ENCODE measurements at regions of chr2 and their contacts with region 1.

Region 1: DNA sequence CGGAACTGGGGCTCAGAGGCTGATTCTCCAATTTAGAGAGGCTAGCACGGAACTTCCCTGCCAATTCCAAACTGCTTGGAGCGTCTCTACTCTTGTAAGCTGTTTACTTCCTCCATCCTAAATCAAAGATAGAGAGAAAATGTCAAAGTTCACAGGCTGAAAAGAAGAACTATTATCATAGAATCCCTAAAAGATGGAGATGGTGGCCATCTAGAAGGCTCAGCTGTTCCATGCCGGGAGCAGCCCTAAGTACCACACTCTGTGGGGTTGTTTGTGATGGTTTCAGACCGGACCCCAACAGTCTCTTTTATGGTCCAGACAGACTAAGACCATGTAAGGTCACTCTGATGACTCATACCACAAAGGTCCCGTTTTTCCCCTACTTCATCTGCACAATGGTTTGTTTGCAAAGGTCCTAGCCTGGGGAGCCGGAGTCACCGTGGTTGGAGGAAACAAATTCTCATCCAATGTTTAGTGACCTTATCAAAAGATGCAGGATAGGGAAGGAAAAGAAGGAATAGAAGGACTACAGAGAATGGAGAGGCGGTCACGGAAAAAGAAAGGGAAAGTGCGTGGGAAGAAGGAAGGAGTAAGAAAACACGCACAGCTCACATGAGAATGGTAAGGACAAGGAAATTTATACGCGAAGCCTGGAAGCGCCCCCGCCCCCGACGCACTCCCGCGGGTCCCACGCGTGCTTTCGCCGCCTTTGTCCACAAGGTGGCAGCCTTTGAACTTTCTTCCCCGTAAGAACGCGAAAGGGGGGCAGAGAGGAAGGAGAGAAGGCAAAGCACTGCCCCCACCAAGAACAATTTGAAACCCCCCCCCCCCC is 453 bp upstream of the ANTXR1 start:
- DNase-seq: peak in 1 of 2 experiments; percentile 57
- H3K4me3 ChIP-seq: peak overlapping the region; percentile 98
- H3K27ac ChIP-seq: no peak overlapping the region
- H3K4me1 ChIP-seq: peaks cover 15% of the 10 kb centered on the region
- H3K27me3 ChIP-seq: no peaks in the 10 kb centered on the region
- CTCF ChIP-seq: peak; percentile 86

Region 2: GRCh38 chr2:68467077-68467960 is 545.2 kb before region 1 on chr2 and contains the starts of genes APLF and FBXO48:
- CTCF ChIA-PET with region 1: interaction called, 9 read pairs
- POLR2A ChIA-PET with region 1: no interaction called
- intact Hi-C with region 1: loop called (anchors 10 kb)
- DNase-seq: peak; percentile 98
- H3K4me3 ChIP-seq: peak within 1 kb of the TSS; percentile 76
- H3K27ac ChIP-seq: peak within 1 kb of the TSS; percentile 48
- H3K4me1 ChIP-seq: peaks cover 17% of the 10 kb centered on the region
- H3K27me3 ChIP-seq: no peaks in the 10 kb centered on the region
- CTCF ChIP-seq: no peak
- total RNA-seq, gene APLF: 3.9 and 4.5 TPM in 2 replicates
- total RNA-seq, gene FBXO48: 1.2 and 1.6 TPM in 2 replicates

Region 3: DNA sequence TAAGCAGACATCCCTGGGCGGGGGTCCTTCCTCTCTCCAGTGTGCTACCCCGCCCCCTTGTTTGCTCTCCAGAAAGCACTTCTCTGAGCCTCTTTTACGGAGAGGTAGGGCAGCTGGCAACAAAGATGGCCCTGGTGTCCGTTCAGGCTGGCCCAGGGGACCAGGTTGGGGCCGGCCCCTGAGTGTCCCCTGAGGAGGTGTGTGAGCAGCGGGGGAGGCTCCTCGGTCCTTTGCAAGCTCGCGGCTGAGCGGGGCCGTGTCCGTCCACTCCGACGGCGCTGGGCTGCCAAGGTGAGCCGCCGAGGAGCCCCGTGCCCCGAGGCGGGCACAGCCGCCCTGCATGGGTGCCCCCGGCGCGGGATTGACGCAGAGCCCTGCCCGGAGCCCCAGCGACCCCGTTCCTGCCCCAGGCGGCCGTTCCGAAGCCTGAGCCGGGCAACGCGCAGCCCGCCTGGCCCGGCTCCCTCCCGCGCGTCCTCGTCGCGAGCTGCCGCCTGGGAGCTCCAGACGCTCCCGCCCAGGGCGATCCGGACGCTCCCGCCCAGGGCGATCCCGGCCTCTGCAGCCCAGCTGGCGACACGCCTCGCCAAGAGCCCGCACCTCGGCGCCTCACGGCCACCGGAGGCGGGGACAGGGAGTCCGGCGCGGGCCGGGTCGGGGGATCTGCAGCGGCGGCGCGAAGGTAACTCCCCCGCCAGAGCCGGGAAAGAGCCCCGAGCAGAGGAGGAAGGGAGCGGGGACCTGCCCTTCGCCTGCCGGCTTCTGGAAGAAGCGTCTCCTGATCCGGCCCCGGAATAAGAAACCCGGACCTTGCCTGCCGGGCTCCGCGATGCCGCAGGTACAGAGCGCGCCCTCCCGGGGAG is 369.3 kb before region 1 on chr2 and contains the start of gene PROKR1:
- CTCF ChIA-PET with region 1: no interaction called
- POLR2A ChIA-PET with region 1: no interaction called
- intact Hi-C with region 1: no loop called
- DNase-seq: peak in 1 of 2 experiments; percentile 22
- H3K4me3 ChIP-seq: no peak within 1 kb of the TSS
- H3K27ac ChIP-seq: no peak within 1 kb of the TSS
- H3K4me1 ChIP-seq: no peaks in the 10 kb centered on the region
- H3K27me3 ChIP-seq: peaks cover 30% of the 10 kb centered on the region
- CTCF ChIP-seq: no peak
- total RNA-seq, gene PROKR1: not detected in 2 replicates

Region 4: DNA sequence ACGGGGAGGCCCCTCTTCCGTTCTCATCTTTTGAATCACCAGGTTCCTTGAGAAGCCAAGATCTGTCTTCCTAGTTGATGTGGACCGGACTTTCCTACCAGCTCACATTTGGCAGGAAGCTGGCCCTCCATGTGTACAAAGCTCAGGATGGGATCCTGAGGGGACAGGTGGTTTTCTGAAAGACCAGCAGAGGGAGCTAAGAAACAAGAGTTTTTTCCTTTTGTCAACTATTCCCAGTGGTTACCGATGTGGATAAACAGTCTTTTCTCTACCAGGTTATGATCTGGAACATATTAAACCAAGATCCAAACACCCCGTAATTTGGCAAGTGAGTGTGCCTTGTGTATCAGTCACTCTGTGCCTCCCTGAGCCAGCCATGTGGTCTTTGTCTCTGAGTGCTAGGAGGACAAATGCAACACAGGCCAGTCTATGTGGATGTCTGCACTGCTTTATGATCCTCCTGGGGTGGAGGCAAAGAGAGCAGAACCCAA is 303.1 kb before region 1 on chr2:
- CTCF ChIA-PET with region 1: interaction called, 3 read pairs
- POLR2A ChIA-PET with region 1: no interaction called
- intact Hi-C with region 1: loop called (anchors 1 kb)
- DNase-seq: peak in 1 of 2 experiments; percentile 16
- H3K4me3 ChIP-seq: no peak overlapping the region
- H3K27ac ChIP-seq: no peak overlapping the region
- H3K4me1 ChIP-seq: no peaks in the 10 kb centered on the region
- H3K27me3 ChIP-seq: no peaks in the 10 kb centered on the region
- CTCF ChIP-seq: peak; percentile 74

Region 5: DNA sequence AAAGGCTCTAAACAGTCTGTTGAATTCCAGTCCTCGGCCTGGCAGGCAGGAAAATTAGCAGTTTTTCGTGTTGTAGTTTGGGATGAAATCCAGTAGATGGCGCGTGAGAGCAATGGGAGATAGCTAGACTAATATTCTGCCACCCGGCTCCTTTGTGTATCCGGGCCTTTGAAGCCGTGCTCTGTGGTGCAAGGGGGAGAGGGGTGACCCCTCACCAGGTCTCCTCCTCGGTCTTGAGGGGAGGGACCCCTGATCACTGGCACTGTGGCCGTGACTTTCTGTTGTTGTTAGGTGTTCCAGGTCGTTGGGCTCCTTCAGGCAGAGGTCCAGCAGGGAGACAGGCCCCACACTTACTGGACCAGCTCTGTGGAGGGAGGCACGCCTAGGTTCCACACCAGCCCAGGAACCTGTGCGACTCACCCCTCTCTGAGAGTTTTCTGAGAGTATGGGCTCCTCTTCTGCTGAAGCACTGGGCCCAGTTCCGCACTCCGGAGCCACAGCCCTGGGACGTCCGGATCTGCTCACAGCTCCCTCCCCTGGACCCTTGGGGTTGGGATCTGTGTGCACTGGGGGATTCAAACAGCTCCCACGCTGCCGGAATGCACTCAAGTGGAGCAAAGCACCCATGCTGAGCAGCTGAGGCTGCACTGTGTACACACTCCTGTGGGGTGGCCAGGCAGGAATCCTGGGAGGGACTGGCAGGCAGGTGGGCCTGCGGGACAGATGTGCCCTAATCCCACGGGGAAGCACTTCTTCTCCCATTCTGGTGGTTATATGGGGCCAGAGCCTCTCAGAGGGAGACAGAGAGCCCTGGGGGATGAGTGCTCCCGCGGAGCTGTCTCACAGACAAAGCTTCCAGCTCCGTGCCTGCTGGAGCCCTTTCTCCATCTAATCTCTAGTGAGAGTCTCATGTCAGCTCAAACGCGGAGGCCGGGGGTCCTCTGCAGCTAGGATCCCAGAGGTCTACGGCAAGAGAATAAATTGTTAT is 68.7 kb before region 1 on chr2:
- CTCF ChIA-PET with region 1: interaction called, 4 read pairs
- POLR2A ChIA-PET with region 1: interaction called, 5 read pairs
- intact Hi-C with region 1: loop called (anchors 1 kb)
- DNase-seq: peak; percentile 52 to 57
- H3K4me3 ChIP-seq: no peak overlapping the region
- H3K27ac ChIP-seq: no peak overlapping the region
- H3K4me1 ChIP-seq: no peaks in the 10 kb centered on the region
- H3K27me3 ChIP-seq: no peaks in the 10 kb centered on the region
- CTCF ChIP-seq: peak; percentile 87

Region 6: GRCh38 chr2:68971591-68972231 is 40.8 kb before region 1 on chr2:
- CTCF ChIA-PET with region 1: no interaction called
- POLR2A ChIA-PET with region 1: no interaction called
- intact Hi-C with region 1: loop called (anchors 5 kb)
- DNase-seq: peak; percentile 72 to 89
- H3K4me3 ChIP-seq: no peak overlapping the region
- H3K27ac ChIP-seq: peak overlapping the region; percentile 80
- H3K4me1 ChIP-seq: peaks cover 28% of the 10 kb centered on the region
- H3K27me3 ChIP-seq: no peaks in the 10 kb centered on the region
- CTCF ChIP-seq: no peak

Region 7: DNA sequence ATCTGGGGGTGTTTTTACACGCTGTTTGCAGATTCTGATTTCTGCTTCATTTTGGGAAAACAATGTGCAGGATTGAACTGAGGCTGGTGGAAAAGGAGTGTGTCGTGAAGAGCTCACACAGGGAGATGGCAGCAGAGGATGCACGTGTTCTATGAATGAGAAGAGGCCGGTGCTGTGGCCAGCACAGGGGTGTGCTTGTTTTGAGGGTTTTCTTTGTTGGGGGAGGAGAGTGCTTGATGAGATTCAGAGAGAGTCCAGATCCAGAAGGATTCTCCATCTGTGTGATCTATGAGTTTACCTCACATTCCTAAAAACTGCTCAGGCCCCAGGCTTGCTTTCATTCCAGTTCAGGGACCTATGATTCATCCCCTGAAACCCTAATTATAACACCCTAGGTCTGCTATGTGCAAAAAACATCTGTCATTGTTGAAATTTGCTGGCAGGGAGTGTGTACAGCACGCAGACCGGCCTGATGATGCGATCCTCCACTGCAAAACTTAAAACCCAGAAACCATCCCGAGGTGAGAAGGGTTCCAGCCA is 1529.0 kb after region 1 on chr2:
- CTCF ChIA-PET with region 1: no interaction called
- POLR2A ChIA-PET with region 1: no interaction called
- intact Hi-C with region 1: no loop called
- DNase-seq: peak; percentile 30 to 85
- H3K4me3 ChIP-seq: no peak overlapping the region
- H3K27ac ChIP-seq: peak overlapping the region; percentile 71
- H3K4me1 ChIP-seq: peaks cover 44% of the 10 kb centered on the region
- H3K27me3 ChIP-seq: no peaks in the 10 kb centered on the region
- CTCF ChIP-seq: no peak